ENCODE measurements at regions of chr1 and their contacts with region 1.

Region 1: GRCh38 chr1:150515328-150516048 is at the start of gene FALEC:
- DNase-seq: peak; percentile 94
- H3K4me3 Mint-ChIP-seq: peak within 1 kb of the TSS; percentile 85
- H3K27ac Mint-ChIP-seq: peak within 1 kb of the TSS; percentile 83
- H3K4me1 Mint-ChIP-seq: peaks cover 33% of the 10 kb centered on the region
- H3K27me3 Mint-ChIP-seq: peaks cover 4% of the 10 kb centered on the region

Region 2: GRCh38 chr1:150256554-150257341 is 258.7 kb before region 1 on chr1:
- CTCF ChIA-PET with region 1: interaction called, 18 read pairs
- DNase-seq: no peak
- H3K4me3 Mint-ChIP-seq: no peak overlapping the region
- H3K27ac Mint-ChIP-seq: no peak overlapping the region
- H3K4me1 Mint-ChIP-seq: peaks cover 21% of the 10 kb centered on the region
- H3K27me3 Mint-ChIP-seq: peaks cover 77% of the 10 kb centered on the region

Region 3: DNA sequence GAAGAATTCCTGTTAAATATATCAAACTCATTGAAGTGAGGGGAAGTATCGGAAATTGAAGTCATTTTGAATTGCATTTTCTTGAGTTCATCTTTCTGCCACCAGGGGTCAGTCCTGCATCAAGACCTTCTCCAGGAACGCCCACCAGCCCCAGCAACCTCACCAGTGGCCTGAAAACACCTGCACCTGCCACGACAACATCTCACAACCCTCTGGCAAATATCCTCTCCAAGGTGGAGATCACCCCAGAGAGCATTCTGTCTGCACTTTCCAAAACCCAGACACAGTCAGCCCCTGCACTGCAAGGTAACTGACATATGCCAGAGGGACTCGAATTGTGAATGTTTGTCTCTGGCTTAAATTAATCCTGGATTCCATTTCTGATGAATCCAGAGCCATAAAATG is 51.1 kb before region 1 on chr1:
- CTCF ChIA-PET with region 1: interaction called, 11 read pairs
- DNase-seq: peak; percentile 80
- H3K4me3 Mint-ChIP-seq: no peak overlapping the region
- H3K27ac Mint-ChIP-seq: no peak overlapping the region
- H3K4me1 Mint-ChIP-seq: peaks cover 3% of the 10 kb centered on the region
- H3K27me3 Mint-ChIP-seq: no peaks in the 10 kb centered on the region

Region 4: DNA sequence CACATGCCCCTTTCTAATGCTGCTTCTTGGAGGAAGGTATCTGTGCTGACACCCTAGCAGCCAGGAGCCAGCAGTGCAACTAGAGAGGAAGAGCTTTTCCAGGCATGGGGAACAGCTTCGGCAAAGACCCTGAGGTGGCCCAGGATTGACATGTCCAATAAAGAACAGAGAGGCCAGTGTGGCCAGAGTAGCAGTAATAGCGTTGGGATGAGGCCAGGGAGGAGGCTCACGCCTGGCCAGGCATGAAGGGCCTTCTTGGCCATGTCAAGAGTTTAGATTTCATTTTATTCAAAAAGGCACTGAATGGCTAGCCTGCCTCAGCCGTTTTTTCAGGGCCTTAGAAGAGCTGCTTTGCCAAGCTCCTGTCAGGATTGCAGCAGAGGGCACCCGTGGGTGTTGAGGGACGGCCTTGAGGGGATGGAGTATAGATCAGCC is 17.4 kb after region 1 on chr1:
- CTCF ChIA-PET with region 1: interaction called, 24 read pairs
- DNase-seq: no peak
- H3K4me3 Mint-ChIP-seq: no peak overlapping the region
- H3K27ac Mint-ChIP-seq: no peak overlapping the region
- H3K4me1 Mint-ChIP-seq: no peaks in the 10 kb centered on the region
- H3K27me3 Mint-ChIP-seq: peaks cover 12% of the 10 kb centered on the region